A549 (cell line): ENCODE measurements at regions of chr7 and their contacts with region 1.

Region 1: DNA sequence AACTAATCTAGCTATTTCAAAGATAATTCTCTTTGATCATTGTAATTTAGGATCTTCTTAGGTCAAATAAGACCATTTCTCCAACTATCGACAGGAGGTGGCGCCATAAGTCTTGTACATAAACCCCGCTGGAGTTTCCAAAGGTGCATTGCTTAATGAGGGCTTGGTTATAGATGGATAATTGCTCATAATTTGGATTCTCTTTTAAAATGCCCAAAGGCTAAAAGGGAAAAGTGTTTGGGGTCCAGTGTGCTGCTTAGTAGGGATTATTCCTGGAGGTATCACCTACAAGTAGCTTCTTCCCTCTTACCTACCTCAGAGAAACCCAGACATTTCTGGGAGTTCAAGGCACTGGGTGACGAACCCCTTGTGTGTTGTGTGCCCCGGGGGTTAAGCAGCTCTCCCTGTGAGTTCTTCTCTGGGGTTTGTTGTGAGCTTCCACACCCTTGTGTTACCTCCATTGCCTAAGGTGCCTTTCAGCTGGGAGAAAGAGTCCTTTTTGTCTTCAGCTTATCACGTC is 75.2 kb downstream of the PAXIP1 start:
- DNase-seq: peak; percentile 66 to 91
- ATAC-seq: peak; percentile 72 to 82
- H3K4me3 ChIP-seq: peak overlapping the region; percentile 67
- H3K27ac ChIP-seq: peak overlapping the region; percentile 43 to 74; a peak in 5 of 6 replicates
- H3K4me1 ChIP-seq: 0 out of 3 replicates have a peak, but pooled peaks cover 4% of the 10 kb centered on the region
- CTCF ChIP-seq: peak; percentile 92
- EP300 ChIP-seq: no peak
- POLR2A ChIP-seq: no peak
- RAD21 ChIP-seq: peak; percentile 86 to 89

Region 2: DNA sequence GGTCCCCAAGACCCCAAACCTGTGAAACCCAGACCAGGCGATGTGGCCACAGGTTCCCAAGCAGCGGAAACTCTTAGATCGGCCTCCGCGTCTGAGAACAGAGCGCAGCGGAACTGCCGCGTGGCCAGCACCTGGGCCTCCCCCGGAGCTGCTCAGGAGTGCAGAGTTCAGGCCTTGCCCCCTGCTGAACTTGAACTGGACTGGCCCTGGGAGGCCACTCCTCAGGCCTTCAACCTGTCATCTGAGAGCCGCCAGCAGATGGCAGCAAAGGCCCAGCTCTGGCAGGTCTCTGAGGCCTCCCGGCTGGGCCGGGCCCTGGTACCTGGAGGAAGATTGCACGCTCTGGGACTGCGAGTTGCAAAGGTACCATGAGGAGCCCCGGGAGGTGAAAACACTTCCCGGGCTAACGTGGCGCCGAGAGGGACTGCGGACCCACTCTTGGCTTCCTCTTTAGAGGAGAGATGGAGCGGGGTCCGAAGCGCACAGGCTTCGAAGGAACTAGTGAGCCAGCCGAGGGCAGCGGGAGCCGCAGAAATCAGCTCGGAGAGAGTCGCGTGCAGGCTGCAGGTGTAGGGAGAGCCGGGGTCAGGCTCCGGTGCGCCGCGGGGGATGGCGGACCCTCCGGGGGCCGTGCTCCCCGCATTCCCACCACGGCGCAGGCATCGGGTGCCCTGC is 13.9 kb before region 1 on chr7:
- CTCF ChIA-PET with region 1: interaction called, 49 read pairs
- POLR2A ChIA-PET with region 1: no interaction called
- DNase-seq: peak; percentile 64 to 69
- ATAC-seq: peak; percentile 93 to 99
- H3K4me3 ChIP-seq: no peak overlapping the region
- H3K27ac ChIP-seq: no peak overlapping the region
- H3K4me1 ChIP-seq: no peaks in the 10 kb centered on the region
- CTCF ChIP-seq: peak; percentile 76
- EP300 ChIP-seq: no peak
- POLR2A ChIP-seq: no peak
- RAD21 ChIP-seq: peak; percentile 81 to 83

Region 3: GRCh38 chr7:154953006-154953684 is 25.5 kb after region 1 on chr7:
- CTCF ChIA-PET with region 1: interaction called, 15 read pairs
- POLR2A ChIA-PET with region 1: no interaction called
- DNase-seq: peak; percentile 27 to 66
- ATAC-seq: peak; percentile 62 to 87; a peak in 4 of 6 replicates
- H3K4me3 ChIP-seq: no peak overlapping the region
- H3K27ac ChIP-seq: no peak overlapping the region
- H3K4me1 ChIP-seq: no peaks in the 10 kb centered on the region
- CTCF ChIP-seq: peak; percentile 61
- EP300 ChIP-seq: no peak
- POLR2A ChIP-seq: no peak
- RAD21 ChIP-seq: peak in 1 of 2 experiments; percentile 12; a peak in 1 of 5 replicates

Region 4: DNA sequence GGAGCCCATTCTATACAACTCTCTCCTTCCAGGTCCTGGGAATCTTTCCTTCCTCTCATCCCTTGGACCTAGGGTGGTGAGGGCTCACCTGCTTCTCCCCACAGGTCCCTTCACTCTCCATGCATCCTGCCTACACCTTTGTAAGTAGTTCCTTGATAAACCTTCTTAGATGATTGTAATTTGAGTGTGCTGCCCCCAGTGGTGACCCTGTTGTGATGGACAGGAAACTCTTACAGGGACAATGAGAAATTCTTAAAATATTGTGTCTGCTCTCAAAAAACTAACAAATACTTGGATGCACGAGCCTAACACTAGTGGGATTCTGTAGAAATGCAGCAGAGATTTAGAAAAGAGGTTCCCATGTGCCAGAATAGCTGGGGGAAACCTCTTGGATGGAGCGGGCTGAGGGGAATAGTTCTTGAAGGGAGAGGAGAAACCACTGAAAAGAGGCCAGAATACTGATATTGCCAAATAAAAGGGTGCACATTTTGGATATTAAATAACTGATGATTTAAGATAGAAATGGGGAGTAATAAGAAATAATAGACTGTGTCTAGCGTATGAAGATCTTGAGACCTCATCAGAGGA is 82.0 kb after region 1 on chr7:
- CTCF ChIA-PET with region 1: interaction called, 12 read pairs
- POLR2A ChIA-PET with region 1: no interaction called
- DNase-seq: peak; percentile 19 to 38
- ATAC-seq: peak; percentile 82 to 85
- H3K4me3 ChIP-seq: no peak overlapping the region
- H3K27ac ChIP-seq: no peak overlapping the region
- H3K4me1 ChIP-seq: no peaks in the 10 kb centered on the region
- CTCF ChIP-seq: peak; percentile 37
- EP300 ChIP-seq: no peak
- POLR2A ChIP-seq: no peak
- RAD21 ChIP-seq: no peak

Region 5: DNA sequence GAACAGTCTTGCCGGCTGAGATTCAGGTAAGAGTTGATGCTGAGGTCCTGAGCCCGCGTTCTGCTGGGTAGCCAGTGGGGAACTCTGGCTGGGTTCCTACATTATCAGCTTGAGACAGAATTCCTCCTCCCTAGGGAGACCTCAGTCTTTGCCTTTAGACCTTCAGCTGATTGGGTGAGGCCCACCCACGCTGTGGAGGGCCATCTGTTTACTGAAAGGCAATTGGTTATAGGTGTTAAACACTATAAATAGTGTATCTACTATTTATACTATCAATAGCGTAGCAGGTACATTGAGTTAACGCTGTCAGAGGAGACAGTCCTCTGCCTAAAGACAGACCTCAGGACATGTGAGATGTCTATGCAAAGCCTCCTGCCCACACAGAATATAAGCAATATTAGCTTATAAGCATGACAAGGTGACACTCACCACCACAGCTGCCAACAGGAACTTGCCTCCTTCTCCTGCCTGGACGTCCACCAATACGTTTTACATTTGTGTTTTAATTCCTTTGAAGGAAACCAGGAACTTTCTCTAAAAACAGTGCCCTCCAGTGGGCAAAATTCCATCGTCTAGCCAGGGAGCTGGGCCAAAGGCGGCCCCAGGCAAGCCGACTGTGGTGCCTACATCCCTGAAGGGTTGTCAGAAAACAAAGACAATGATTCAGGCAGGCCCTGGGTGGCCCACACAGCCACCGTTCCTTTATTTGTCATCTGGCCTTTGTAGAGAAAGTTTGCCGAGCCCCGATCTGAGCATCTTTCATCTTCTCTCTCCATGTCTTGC is 428.8 kb after region 1 on chr7:
- CTCF ChIA-PET with region 1: interaction called, 30 read pairs
- POLR2A ChIA-PET with region 1: no interaction called
- DNase-seq: peak; percentile 29 to 43
- ATAC-seq: peak; percentile 58 to 83; a peak in 3 of 6 replicates
- H3K4me3 ChIP-seq: no peak overlapping the region
- H3K27ac ChIP-seq: no peak overlapping the region
- H3K4me1 ChIP-seq: no peaks in the 10 kb centered on the region
- CTCF ChIP-seq: peak; percentile 58
- EP300 ChIP-seq: no peak
- POLR2A ChIP-seq: no peak
- RAD21 ChIP-seq: peak; percentile 36 to 44; a peak in 3 of 5 replicates

Region 6: GRCh38 chr7:155371884-155372781 is 444.4 kb after region 1 on chr7:
- CTCF ChIA-PET with region 1: interaction called, 19 read pairs
- POLR2A ChIA-PET with region 1: interaction called, 3 read pairs
- DNase-seq: peak; percentile 29 to 51
- ATAC-seq: peak; percentile 61 to 88; a peak in 5 of 6 replicates
- H3K4me3 ChIP-seq: peak overlapping the region; percentile 37
- H3K27ac ChIP-seq: peak overlapping the region in 1 of 2 experiments; percentile 56; a peak in 3 of 6 replicates
- H3K4me1 ChIP-seq: peaks cover 13% of the 10 kb centered on the region; the same call in 2 of the 3 replicates
- CTCF ChIP-seq: peak; percentile 75
- EP300 ChIP-seq: no peak
- POLR2A ChIP-seq: no peak
- RAD21 ChIP-seq: 0 out of 5 replicates have a peak, but pooled peaks of 1 of the 2 experiments have one; percentile 14